ENCODE measurements at regions of chr5 and their contacts with region 1.

Region 1: GRCh38 chr5:126693806-126694802 is 82.8 kb upstream of the LMNB1 start:
- DNase-seq: no peak
- ATAC-seq: no peak
- H3K4me3 ChIP-seq: no peak overlapping the region
- H3K27ac ChIP-seq: no peak overlapping the region
- H3K4me1 ChIP-seq: no peaks in the 10 kb centered on the region
- CTCF ChIP-seq: no peak
- EP300 ChIP-seq: no peak
- POLR2A ChIP-seq: no peak
- RAD21 ChIP-seq: no peak

Region 2: DNA sequence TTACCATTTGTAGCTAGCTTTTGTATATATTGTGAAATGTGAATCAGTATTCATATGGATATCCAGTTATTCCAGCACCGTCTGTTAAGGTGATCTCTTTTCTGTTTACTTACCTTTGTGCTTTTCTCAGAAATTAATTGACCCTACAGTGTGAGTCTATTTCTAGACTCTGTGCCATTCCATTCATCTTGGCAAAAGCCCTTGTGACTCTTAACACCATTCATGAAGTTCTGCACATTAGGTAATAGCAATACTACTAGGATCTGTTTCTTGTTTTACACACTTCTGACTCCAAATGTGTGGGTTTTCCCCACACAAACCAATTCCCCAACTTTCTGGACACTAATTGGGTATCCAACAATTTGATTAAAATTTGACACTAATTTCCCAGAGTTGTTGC is 1429.8 kb after region 1 on chr5:
- CTCF ChIA-PET with region 1: no interaction called
- POLR2A ChIA-PET with region 1: interaction called, 11 read pairs
- DNase-seq: no peak
- ATAC-seq: no peak
- H3K4me3 ChIP-seq: no peak overlapping the region
- H3K27ac ChIP-seq: no peak overlapping the region
- H3K4me1 ChIP-seq: no peaks in the 10 kb centered on the region
- CTCF ChIP-seq: no peak
- EP300 ChIP-seq: no peak
- POLR2A ChIP-seq: no peak
- RAD21 ChIP-seq: no peak

Measured in A549 (cell line).